Ovary (tissue), 10 donors: ENCODE measurements at regions of chr5 and their contacts with region 1.

Region 1: DNA sequence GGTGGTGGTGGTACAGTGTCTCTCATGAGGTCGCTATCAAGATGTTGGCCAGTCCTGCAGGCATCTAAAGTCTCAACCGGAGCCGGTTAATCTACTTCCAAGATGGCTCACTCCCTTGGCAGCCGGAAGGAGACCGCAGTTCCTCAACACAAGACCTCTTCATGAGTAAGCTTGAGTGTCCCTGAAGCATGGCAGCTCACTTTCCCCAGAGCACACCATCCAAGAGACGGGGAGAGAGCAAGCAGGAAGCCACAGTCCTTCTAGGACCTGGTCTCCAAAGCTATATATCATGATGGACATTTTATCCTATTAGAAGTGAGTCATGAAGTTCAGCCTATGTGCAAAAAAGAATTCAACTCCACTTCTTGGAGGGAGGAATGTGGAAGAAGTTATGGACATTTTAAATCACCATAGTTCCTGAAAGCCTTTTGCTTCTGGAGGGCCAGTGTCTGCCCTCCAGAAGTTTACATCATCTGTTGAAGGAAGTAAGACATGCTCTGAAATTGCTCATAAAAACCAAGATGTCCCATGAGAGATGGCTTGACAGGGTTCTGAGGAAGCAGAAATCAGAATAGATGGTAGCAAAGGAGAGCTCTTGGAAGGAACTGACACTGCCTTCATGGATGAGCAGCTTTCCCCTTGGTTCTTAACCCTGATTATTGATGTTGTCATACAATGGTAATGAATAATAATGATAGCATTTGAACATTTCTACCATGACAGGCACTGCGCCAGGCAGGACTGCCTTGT is 21.3 kb downstream of the GALNT10 start:
- DNase-seq: no peak
- H3K4me3 ChIP-seq: no peak overlapping the region
- H3K27ac ChIP-seq: no peak overlapping the region
- H3K4me1 ChIP-seq: peaks cover 9% of the 10 kb centered on the region
- H3K27me3 ChIP-seq: no peaks in the 10 kb centered on the region
- CTCF ChIP-seq: no peak
- EP300 ChIP-seq: no peak
- POLR2A ChIP-seq: no peak

Region 2: DNA sequence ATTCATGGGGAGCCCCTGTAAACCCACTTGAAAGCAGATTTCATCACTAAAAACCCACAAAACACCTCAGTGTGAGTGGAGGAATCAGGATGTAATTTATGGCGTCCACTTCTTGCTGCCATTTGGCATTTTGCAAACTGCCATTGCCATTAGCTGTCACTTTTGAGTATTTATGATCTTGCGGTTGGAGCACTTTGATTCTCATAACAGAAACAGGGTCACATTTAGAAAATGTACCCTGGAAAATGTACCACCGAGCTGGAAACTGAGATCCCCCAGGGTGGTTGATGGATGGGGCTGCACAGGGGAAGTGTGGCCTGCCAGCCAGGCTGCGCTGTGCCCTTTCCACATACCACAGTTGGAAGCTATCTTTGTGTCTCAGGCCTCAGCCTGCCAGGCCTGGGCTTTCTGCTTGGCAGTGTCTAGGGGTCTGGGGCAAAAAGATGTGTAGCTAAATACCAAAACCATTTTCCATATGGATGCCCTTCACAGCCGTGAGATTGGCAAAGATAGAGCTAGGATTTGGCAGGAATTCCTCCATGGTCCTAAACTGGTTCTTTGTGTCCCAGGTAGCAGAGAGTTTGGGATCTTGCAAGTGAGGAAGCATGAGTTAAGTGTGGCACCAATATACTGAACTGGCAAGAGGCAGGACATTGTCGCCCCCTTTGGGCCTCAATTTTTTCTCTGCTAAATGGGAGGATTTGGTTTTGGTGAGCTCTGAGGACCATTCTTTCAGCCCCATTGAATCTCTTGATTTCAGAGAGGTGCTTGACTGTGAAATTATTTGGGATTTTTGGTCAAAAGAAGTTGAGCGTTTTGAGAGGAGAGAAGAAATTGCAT is 24.9 kb after region 1 on chr5:
- intact Hi-C with region 1: loop called in 1 of 4 experiments (anchors 2 kb)
- DNase-seq: no peak
- H3K4me3 ChIP-seq: no peak overlapping the region
- H3K27ac ChIP-seq: no peak overlapping the region
- H3K4me1 ChIP-seq: peaks cover 12% of the 10 kb centered on the region
- H3K27me3 ChIP-seq: no peaks in the 10 kb centered on the region
- CTCF ChIP-seq: no peak
- EP300 ChIP-seq: no peak
- POLR2A ChIP-seq: no peak